ENCODE measurements at regions of chr1 and their contacts with region 1.

Region 1: DNA sequence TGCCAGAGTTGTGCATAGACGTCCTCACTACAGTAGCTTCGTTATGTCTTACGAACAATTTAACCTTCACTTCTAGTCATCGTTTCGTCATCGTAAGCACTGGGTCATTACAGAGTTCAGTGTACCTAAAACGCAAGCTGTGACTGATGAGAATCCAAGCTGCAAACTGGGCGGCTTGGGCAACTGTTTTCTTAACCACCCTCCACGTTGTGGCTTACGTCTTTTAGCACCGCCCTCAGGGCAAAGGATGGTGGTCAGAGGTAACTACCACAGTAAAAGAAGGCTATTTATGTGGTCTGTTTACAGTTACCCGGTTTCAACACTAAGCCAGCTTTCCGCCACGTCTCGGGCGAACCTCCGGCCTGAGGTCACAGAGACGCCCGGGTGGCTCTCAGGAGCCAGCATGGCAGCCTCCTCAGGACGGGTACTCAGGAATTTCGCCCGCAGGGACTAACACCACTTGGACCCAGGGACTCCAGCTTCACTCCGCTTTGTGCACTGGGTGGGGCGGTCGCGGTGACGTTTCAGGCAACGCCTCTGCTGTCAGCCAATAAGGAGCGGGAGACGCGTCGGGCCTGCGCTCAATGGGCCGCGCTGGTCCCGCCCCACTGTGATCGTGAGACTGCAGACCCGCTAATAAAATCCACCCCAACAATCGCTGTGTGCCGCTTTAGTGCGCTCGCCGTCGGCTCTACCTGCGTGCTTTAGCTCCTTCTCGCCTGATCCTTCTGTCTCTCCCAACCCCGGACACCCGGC is at the start of gene CTH:
- DNase-seq: peak; percentile 95 to 96
- H3K4me3 ChIP-seq: peak within 1 kb of the TSS; percentile 79 to 96 (median 88)
- H3K27ac ChIP-seq: peak within 1 kb of the TSS; percentile 98
- H3K4me1 ChIP-seq: no peaks in the 10 kb centered on the region; a peak in 1 of 7 replicates
- H3K27me3 ChIP-seq: no peaks in the 10 kb centered on the region
- CTCF ChIP-seq: no peak
- EP300 ChIP-seq: peak; percentile 28 to 79; a peak in 2 of 3 replicates
- POLR2A ChIP-seq: peak; percentile 99 to 100
- RAD21 ChIP-seq: no peak
- total RNA-seq, gene CTH: 33.2 and 34.5 TPM in 2 replicates

Region 2: DNA sequence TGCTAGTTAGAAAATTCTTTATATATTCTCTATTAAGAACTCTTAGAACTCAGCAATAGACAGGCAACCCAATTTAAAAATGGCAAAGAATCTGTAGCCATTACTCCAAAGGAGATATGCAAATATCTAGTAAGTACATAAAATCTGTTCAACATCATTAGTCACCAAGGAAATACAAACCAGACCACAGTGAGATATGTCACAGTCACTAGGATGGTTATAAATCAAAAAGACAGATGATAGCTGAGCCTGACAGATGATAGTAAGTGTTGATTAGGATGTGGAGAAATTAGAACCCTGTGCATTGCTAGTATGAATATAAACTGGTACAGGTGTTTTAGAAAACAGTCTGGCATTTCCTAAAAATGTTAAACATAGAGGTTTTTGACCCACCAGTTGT is 163.0 kb before region 1 on chr1:
- CTCF ChIA-PET with region 1: no interaction called
- POLR2A ChIA-PET with region 1: interaction called, 11 read pairs
- DNase-seq: no peak
- H3K4me3 ChIP-seq: no peak overlapping the region
- H3K27ac ChIP-seq: no peak overlapping the region
- H3K4me1 ChIP-seq: no peaks in the 10 kb centered on the region
- H3K27me3 ChIP-seq: no peaks in the 10 kb centered on the region
- CTCF ChIP-seq: no peak
- EP300 ChIP-seq: no peak
- POLR2A ChIP-seq: no peak
- RAD21 ChIP-seq: no peak

Region 3: GRCh38 chr1:70299472-70299871 is 111.3 kb before region 1 on chr1:
- CTCF ChIA-PET with region 1: no interaction called
- POLR2A ChIA-PET with region 1: interaction called, 10 read pairs
- DNase-seq: no peak
- H3K4me3 ChIP-seq: no peak overlapping the region
- H3K27ac ChIP-seq: no peak overlapping the region
- H3K4me1 ChIP-seq: no peaks in the 10 kb centered on the region
- H3K27me3 ChIP-seq: no peaks in the 10 kb centered on the region
- CTCF ChIP-seq: no peak
- EP300 ChIP-seq: no peak
- POLR2A ChIP-seq: no peak
- RAD21 ChIP-seq: no peak

Region 4: GRCh38 chr1:70348399-70349165 is 62.2 kb before region 1 on chr1:
- CTCF ChIA-PET with region 1: interaction called, 8 read pairs
- POLR2A ChIA-PET with region 1: interaction called, 103 read pairs
- DNase-seq: no peak
- H3K4me3 ChIP-seq: no peak overlapping the region
- H3K27ac ChIP-seq: no peak overlapping the region
- H3K4me1 ChIP-seq: no peaks in the 10 kb centered on the region
- H3K27me3 ChIP-seq: no peaks in the 10 kb centered on the region
- CTCF ChIP-seq: no peak
- EP300 ChIP-seq: no peak
- POLR2A ChIP-seq: no peak
- RAD21 ChIP-seq: no peak

Region 5: GRCh38 chr1:70372426-70372825 is 38.4 kb before region 1 on chr1:
- CTCF ChIA-PET with region 1: no interaction called
- POLR2A ChIA-PET with region 1: interaction called, 58 read pairs
- DNase-seq: no peak
- H3K4me3 ChIP-seq: no peak overlapping the region
- H3K27ac ChIP-seq: no peak overlapping the region
- H3K4me1 ChIP-seq: peaks cover 0 to 3% (median 0%) of the 10 kb centered on the region in 4 experiments; a peak in 1 of 7 replicates
- H3K27me3 ChIP-seq: no peaks in the 10 kb centered on the region
- CTCF ChIP-seq: no peak
- EP300 ChIP-seq: no peak
- POLR2A ChIP-seq: no peak
- RAD21 ChIP-seq: no peak

Region 6: GRCh38 chr1:70397014-70397413 is 13.8 kb before region 1 on chr1:
- CTCF ChIA-PET with region 1: interaction called, 4 read pairs
- POLR2A ChIA-PET with region 1: interaction called, 52 read pairs
- DNase-seq: no peak
- H3K4me3 ChIP-seq: no peak overlapping the region
- H3K27ac ChIP-seq: no peak overlapping the region
- H3K4me1 ChIP-seq: no peaks in the 10 kb centered on the region
- H3K27me3 ChIP-seq: no peaks in the 10 kb centered on the region
- CTCF ChIP-seq: no peak
- EP300 ChIP-seq: no peak
- POLR2A ChIP-seq: no peak
- RAD21 ChIP-seq: no peak

Region 7: GRCh38 chr1:70436622-70437251 is 26.0 kb after region 1 on chr1:
- CTCF ChIA-PET with region 1: interaction called, 3 read pairs
- POLR2A ChIA-PET with region 1: interaction called, 70 read pairs
- DNase-seq: no peak
- H3K4me3 ChIP-seq: no peak overlapping the region
- H3K27ac ChIP-seq: no peak overlapping the region
- H3K4me1 ChIP-seq: peaks cover 0 to 5% (median 1%) of the 10 kb centered on the region in 4 experiments; a peak in 2 of 7 replicates
- H3K27me3 ChIP-seq: no peaks in the 10 kb centered on the region
- CTCF ChIP-seq: no peak
- EP300 ChIP-seq: no peak
- POLR2A ChIP-seq: no peak
- RAD21 ChIP-seq: peak; percentile 21 to 35; a peak in 3 of 4 replicates

Region 8: DNA sequence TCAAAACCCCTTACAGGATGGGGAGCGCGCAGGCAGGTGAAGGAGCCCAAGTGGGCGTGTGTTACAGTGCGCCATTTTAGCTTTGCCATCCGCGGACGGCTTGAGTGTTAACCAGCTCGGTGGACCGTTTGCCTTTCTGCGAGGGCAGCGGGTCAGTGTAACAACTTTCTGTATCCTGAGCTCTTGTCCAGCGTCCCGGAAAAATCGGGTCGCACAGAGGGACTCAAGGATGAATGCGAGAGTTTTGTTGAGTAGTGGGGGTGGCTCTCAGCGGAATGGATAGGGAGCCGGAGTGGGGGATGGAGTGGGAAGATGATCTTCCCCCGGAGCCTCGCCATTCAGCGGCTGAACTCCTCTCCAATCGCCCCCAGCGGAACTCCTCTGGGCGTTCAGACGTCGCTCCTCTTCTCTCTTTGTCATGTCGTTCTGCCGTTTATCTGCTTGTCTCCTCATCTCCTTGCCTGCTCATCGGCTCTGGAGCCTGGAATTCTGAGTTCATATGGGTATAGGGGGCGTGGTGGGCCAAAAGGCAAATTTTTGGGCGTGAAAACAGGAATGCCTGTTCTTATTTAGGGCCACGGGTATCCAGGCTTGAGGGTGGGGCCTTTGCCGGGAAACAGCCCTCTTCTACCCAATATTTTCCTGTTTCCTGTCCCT is 295.7 kb after region 1 on chr1:
- CTCF ChIA-PET with region 1: no interaction called
- POLR2A ChIA-PET with region 1: no interaction called
- DNase-seq: peak in 1 of 2 experiments; percentile 10
- H3K4me3 ChIP-seq: peak overlapping the region; percentile 63 to 73 (median 66)
- H3K27ac ChIP-seq: no peak overlapping the region; the same call in 1 of the 2 replicates
- H3K4me1 ChIP-seq: no peaks in the 10 kb centered on the region
- H3K27me3 ChIP-seq: peaks cover 0 to 1% (median 0%) of the 10 kb centered on the region in 4 experiments; a peak in 1 of 7 replicates
- CTCF ChIP-seq: no peak
- EP300 ChIP-seq: no peak
- POLR2A ChIP-seq: peak in 1 of 2 experiments; percentile 74; a peak in 2 of 3 replicates
- RAD21 ChIP-seq: no peak; a peak in 2 of 4 replicates

Measured in H1 (cell line).